Cardiac septum (tissue), 1 donor: ENCODE measurements at regions of chr9 and their contacts with region 1.

Region 1: GRCh38 chr9:21802195-21803000 is at the start of gene MTAP:
- DNase-seq: peak; percentile 94
- total RNA-seq, gene MTAP: 13.0 TPM

Region 2: DNA sequence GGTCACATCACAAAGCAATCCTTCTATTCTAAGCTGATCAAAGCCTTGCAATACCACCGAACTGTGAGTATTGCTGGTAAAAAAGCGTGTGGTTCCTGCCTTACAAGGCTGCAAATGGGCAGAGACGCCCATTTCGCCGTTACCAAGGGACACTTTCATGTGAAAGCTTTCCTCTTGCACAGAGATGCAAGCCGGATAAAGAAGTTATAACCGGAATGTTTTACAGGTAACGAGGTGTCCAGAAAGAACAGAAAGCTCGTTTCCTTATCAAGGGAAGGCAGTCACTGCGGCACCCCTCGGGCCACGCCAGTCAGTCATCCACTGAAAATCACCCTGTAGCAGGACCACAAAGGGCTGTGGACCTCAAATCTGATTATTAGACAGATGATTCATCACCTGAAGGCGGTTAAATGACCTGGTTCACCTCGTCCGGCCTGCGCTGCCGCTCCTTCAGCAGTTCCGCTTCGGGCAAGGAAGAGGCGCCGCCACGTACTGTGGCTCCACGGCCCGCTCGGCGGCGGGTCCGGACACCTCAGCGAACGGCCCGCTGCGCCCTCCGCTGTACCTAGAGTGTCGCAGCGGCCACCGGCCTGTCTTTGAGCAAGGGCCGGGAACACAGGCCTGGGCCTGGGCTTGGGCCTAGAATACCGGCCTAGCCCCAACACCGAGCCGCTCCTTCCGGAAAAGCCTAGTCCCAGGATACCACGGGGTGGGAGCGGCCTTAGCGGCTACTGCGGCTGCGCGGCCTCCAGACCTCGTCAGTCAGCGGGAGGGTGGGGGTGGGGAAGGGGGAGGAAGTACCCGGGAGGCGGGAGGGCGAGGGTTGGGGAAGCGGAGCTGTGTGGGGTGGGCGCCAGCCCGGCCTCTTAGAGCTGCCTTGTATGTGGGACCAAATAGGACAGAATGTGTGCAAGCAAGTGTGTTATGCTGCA is 467.4 kb before region 1 on chr9 and contains the start of gene KLHL9:
- intact Hi-C with region 1: loop called (anchors 5 kb)
- DNase-seq: peak; percentile 96
- total RNA-seq, gene KLHL9: 12.5 TPM

Region 3: GRCh38 chr9:21634951-21635350 is 167.4 kb before region 1 on chr9:
- intact Hi-C with region 1: no loop called
- DNase-seq: no peak